Aorta (tissue), 5 donors: ENCODE measurements at regions of chr16 and their contacts with region 1.

Region 1: GRCh38 chr16:88194397-88195268 is 188.1 kb upstream of the ZNF469 start:
- DNase-seq: peak in 1 of 2 donors; percentile 66
- ATAC-seq: no peak
- H3K4me3 ChIP-seq: no peak overlapping the region
- H3K27ac ChIP-seq: no peak overlapping the region
- H3K4me1 ChIP-seq: no peaks in the 10 kb centered on the region
- H3K27me3 ChIP-seq: no peaks in the 10 kb centered on the region

Region 2: GRCh38 chr16:88088155-88088581 is 106.5 kb before region 1 on chr16:
- intact Hi-C with region 1: no loop called
- DNase-seq: peak in 1 of 2 donors; percentile 67
- ATAC-seq: peak; percentile 39
- H3K4me3 ChIP-seq: no peak overlapping the region
- H3K27ac ChIP-seq: no peak overlapping the region
- H3K4me1 ChIP-seq: no peaks in the 10 kb centered on the region
- H3K27me3 ChIP-seq: no peaks in the 10 kb centered on the region

Region 3: DNA sequence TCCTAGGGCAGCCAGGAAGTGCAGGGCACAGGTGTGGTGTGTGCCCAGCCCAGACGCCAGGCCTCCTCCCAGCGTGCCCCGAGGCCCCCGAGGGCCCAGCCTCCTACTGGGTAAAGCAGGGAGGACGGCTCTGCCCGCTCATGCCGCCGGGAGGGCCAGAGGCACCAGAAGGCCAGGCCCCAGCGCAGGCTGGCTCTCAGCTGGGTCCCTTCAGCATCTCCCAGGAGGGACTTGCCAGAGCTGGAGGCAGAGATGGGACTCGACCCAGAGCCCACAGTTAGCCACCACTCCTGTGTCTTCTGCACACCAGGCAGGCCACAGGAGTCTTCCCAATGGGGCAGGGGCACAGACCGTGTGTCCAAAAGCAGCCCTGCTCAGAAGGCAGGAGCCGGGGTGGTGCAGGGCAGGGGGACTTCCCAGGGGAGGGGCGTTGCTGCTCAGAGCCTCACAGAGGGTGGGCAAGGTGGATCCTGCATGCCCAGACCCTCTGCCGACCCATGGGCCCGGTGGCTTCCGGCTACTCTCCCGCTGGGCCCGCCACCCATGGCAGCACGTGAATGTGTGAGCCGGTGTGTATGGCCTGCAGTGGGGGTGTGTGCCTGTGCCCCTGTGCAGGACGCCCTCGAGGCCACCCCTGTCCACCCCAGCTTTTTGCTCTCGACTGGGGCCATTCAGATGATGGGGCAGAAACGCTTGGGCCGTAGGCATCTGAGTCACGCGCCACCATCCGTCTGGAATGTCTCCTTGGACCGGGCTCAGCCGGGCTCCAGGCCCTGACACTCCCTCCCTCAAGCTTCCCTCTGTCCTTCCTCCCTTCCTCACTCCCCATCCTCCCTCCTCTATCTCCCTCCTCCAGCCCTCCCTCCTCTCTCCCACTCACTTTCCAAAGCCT is 182.4 kb after region 1 on chr16:
- intact Hi-C with region 1: loop called in 1 of 2 experiments (anchors 5 kb)
- DNase-seq: peak; percentile 35 to 76
- ATAC-seq: no peak
- H3K4me3 ChIP-seq: no peak overlapping the region
- H3K27ac ChIP-seq: no peak overlapping the region
- H3K4me1 ChIP-seq: no peaks in the 10 kb centered on the region
- H3K27me3 ChIP-seq: no peaks in the 10 kb centered on the region

Region 4: DNA sequence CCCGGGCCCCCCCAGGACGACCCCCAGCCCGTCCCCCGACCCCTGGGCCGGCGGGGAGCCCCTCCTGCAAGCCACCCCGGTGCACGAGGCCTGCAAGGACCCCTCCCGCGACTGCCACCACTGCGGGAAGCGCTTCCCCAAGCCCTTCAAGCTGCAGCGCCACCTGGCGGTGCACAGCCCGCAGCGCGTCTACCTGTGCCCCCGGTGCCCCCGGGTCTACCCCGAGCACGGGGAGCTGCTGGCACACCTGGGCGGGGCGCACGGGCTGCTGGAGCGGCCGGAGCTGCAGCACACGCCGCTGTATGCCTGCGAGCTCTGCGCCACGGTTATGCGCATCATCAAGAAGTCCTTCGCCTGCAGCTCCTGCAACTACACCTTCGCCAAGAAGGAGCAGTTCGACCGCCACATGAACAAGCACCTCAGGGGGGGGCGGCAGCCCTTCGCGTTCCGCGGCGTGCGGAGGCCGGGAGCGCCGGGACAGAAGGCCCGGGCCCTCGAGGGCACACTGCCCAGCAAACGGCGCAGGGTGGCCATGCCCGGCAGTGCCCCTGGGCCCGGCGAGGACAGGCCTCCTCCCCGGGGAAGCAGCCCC is 242.8 kb after region 1 on chr16:
- intact Hi-C with region 1: loop called (anchors 2 to 5 kb)
- DNase-seq: peak in 1 of 2 donors; percentile 87
- ATAC-seq: no peak
- H3K4me3 ChIP-seq: no peak overlapping the region
- H3K27ac ChIP-seq: no peak overlapping the region
- H3K4me1 ChIP-seq: no peaks in the 10 kb centered on the region
- H3K27me3 ChIP-seq: no peaks in the 10 kb centered on the region